ENCODE measurements at regions of chr1 and their contacts with region 1.

Region 1: GRCh38 chr1:198620951-198621824 is 17.7 kb upstream of the PTPRC start:
- DNase-seq: peak; percentile 84
- H3K4me3 Mint-ChIP-seq: peak overlapping the region; percentile 89
- H3K27ac Mint-ChIP-seq: peak overlapping the region; percentile 99
- H3K4me1 Mint-ChIP-seq: peaks cover 84% of the 10 kb centered on the region
- H3K27me3 Mint-ChIP-seq: no peaks in the 10 kb centered on the region

Region 2: GRCh38 chr1:198523182-198523950 is 97.8 kb before region 1 on chr1:
- CTCF ChIA-PET with region 1: interaction called, 29 read pairs
- DNase-seq: peak; percentile 36
- H3K4me3 Mint-ChIP-seq: peak overlapping the region; percentile 76
- H3K27ac Mint-ChIP-seq: peak overlapping the region; percentile 89
- H3K4me1 Mint-ChIP-seq: peaks cover 82% of the 10 kb centered on the region
- H3K27me3 Mint-ChIP-seq: no peaks in the 10 kb centered on the region

Region 3: GRCh38 chr1:198575798-198576641 is 45.2 kb before region 1 on chr1:
- CTCF ChIA-PET with region 1: no interaction called
- DNase-seq: no peak
- H3K4me3 Mint-ChIP-seq: no peak overlapping the region
- H3K27ac Mint-ChIP-seq: no peak overlapping the region
- H3K4me1 Mint-ChIP-seq: no peaks in the 10 kb centered on the region
- H3K27me3 Mint-ChIP-seq: no peaks in the 10 kb centered on the region

Region 4: GRCh38 chr1:198598796-198599321 is 22.3 kb before region 1 on chr1:
- CTCF ChIA-PET with region 1: interaction called, 11 read pairs
- DNase-seq: peak; percentile 22
- H3K4me3 Mint-ChIP-seq: peak overlapping the region; percentile 25
- H3K27ac Mint-ChIP-seq: peak overlapping the region; percentile 89
- H3K4me1 Mint-ChIP-seq: peaks cover 70% of the 10 kb centered on the region
- H3K27me3 Mint-ChIP-seq: no peaks in the 10 kb centered on the region

Region 5: GRCh38 chr1:198610362-198610761 is 10.8 kb before region 1 on chr1:
- CTCF ChIA-PET with region 1: interaction called, 24 read pairs
- DNase-seq: no peak
- H3K4me3 Mint-ChIP-seq: peak overlapping the region; percentile 57
- H3K27ac Mint-ChIP-seq: peak overlapping the region; percentile 91
- H3K4me1 Mint-ChIP-seq: peaks cover 76% of the 10 kb centered on the region
- H3K27me3 Mint-ChIP-seq: no peaks in the 10 kb centered on the region

Region 6: GRCh38 chr1:198638894-198639635 is 17.9 kb after region 1 on chr1 and contains the start of gene PTPRC:
- CTCF ChIA-PET with region 1: interaction called, 80 read pairs
- DNase-seq: no peak
- H3K4me3 Mint-ChIP-seq: peak within 1 kb of the TSS; percentile 92
- H3K27ac Mint-ChIP-seq: peak within 1 kb of the TSS; percentile 97
- H3K4me1 Mint-ChIP-seq: peaks cover 50% of the 10 kb centered on the region
- H3K27me3 Mint-ChIP-seq: no peaks in the 10 kb centered on the region

Region 7: GRCh38 chr1:198651650-198652400 is 30.6 kb after region 1 on chr1:
- CTCF ChIA-PET with region 1: interaction called, 16 read pairs
- DNase-seq: no peak
- H3K4me3 Mint-ChIP-seq: peak overlapping the region; percentile 59
- H3K27ac Mint-ChIP-seq: peak overlapping the region; percentile 85
- H3K4me1 Mint-ChIP-seq: peaks cover 79% of the 10 kb centered on the region
- H3K27me3 Mint-ChIP-seq: no peaks in the 10 kb centered on the region

Region 8: GRCh38 chr1:198681831-198682759 is 60.9 kb after region 1 on chr1:
- CTCF ChIA-PET with region 1: interaction called, 14 read pairs
- DNase-seq: peak; percentile 90
- H3K4me3 Mint-ChIP-seq: peak overlapping the region; percentile 68
- H3K27ac Mint-ChIP-seq: peak overlapping the region; percentile 92
- H3K4me1 Mint-ChIP-seq: peaks cover 88% of the 10 kb centered on the region
- H3K27me3 Mint-ChIP-seq: no peaks in the 10 kb centered on the region

Region 9: GRCh38 chr1:198726455-198726854 is 105.3 kb after region 1 on chr1:
- CTCF ChIA-PET with region 1: no interaction called
- DNase-seq: no peak
- H3K4me3 Mint-ChIP-seq: no peak overlapping the region
- H3K27ac Mint-ChIP-seq: no peak overlapping the region
- H3K4me1 Mint-ChIP-seq: peaks cover 27% of the 10 kb centered on the region
- H3K27me3 Mint-ChIP-seq: no peaks in the 10 kb centered on the region